PC-9 (cell line): ENCODE measurements at regions of chr13 and their contacts with region 1.

Region 1: DNA sequence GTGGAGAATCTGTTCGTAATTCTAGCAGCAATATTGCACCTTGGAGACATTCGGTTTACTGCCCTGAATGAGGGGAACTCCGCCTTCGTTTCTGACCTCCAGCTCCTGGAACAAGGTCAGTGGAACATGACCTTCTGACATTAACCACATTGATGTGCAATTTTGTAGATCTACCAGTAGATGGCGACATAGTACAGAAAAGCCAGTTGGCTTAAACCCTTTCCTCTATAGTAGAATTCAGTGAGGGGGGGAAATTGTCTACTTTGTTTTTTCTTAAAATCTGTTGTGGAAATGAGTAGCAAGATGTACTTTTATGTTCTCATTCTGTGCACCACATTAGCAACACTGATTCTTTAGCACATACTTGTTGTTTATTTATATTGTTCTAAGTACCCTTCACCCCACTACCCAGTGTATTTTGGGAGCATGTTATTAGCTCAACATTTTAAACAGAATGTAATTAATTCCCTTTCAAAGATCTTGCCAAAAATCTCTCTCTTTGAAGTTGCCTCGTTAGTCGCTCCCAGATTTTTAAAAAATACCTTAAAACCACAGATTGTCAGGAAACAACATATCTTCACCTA is 332.2 kb downstream of the MYO16 start:
- DNase-seq: peak in 1 of 2 experiments; percentile 63
- H3K4me3 ChIP-seq: no peak overlapping the region
- H3K27ac ChIP-seq: peak overlapping the region; percentile 25
- H3K4me1 ChIP-seq: peaks cover 46% of the 10 kb centered on the region
- H3K27me3 ChIP-seq: no peaks in the 10 kb centered on the region
- CTCF ChIP-seq: peak; percentile 98

Region 2: GRCh38 chr13:107867701-107868661 is 1093.7 kb before region 1 on chr13:
- CTCF ChIA-PET with region 1: no interaction called
- POLR2A ChIA-PET with region 1: no interaction called
- intact Hi-C with region 1: no loop called
- DNase-seq: peak in 1 of 2 experiments; percentile 29
- H3K4me3 ChIP-seq: peak overlapping the region; percentile 61
- H3K27ac ChIP-seq: no peak overlapping the region
- H3K4me1 ChIP-seq: no peaks in the 10 kb centered on the region
- H3K27me3 ChIP-seq: no peaks in the 10 kb centered on the region
- CTCF ChIP-seq: peak; percentile 59

Region 3: GRCh38 chr13:108895220-108895704 is 66.4 kb before region 1 on chr13:
- CTCF ChIA-PET with region 1: no interaction called
- POLR2A ChIA-PET with region 1: no interaction called
- intact Hi-C with region 1: no loop called
- DNase-seq: peak in 1 of 2 experiments; percentile 78
- H3K4me3 ChIP-seq: no peak overlapping the region
- H3K27ac ChIP-seq: no peak overlapping the region
- H3K4me1 ChIP-seq: peaks cover 7% of the 10 kb centered on the region
- H3K27me3 ChIP-seq: no peaks in the 10 kb centered on the region
- CTCF ChIP-seq: peak; percentile 78

Region 4: DNA sequence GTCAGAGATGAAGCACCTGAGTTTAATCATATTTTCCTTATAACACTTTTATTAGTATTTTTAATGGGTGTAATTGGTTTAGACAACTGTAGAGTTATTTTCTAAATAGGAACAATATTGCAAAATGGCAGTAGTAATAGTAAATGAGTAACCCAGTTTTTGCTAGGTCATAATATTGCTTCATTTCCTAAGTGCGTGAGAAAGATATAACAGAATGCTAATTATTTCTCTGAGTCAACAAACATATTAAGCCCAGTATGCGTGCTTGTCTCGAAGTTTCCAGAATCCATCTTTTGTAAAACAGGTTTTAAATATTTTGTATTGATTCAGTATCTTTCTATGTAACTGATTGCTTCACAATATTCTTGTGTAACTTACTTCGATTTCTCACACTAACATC is 16.9 kb before region 1 on chr13:
- CTCF ChIA-PET with region 1: no interaction called
- POLR2A ChIA-PET with region 1: no interaction called
- intact Hi-C with region 1: no loop called
- DNase-seq: peak in 1 of 2 experiments; percentile 49
- H3K4me3 ChIP-seq: no peak overlapping the region
- H3K27ac ChIP-seq: no peak overlapping the region
- H3K4me1 ChIP-seq: no peaks in the 10 kb centered on the region
- H3K27me3 ChIP-seq: no peaks in the 10 kb centered on the region
- CTCF ChIP-seq: no peak

Region 5: GRCh38 chr13:109172136-109172535 is 210.5 kb after region 1 on chr13:
- CTCF ChIA-PET with region 1: no interaction called
- POLR2A ChIA-PET with region 1: interaction called, 12 read pairs
- intact Hi-C with region 1: no loop called
- DNase-seq: no peak
- H3K4me3 ChIP-seq: no peak overlapping the region
- H3K27ac ChIP-seq: no peak overlapping the region
- H3K4me1 ChIP-seq: no peaks in the 10 kb centered on the region; the same call in 1 of the 2 replicates
- H3K27me3 ChIP-seq: no peaks in the 10 kb centered on the region
- CTCF ChIP-seq: no peak

Region 6: DNA sequence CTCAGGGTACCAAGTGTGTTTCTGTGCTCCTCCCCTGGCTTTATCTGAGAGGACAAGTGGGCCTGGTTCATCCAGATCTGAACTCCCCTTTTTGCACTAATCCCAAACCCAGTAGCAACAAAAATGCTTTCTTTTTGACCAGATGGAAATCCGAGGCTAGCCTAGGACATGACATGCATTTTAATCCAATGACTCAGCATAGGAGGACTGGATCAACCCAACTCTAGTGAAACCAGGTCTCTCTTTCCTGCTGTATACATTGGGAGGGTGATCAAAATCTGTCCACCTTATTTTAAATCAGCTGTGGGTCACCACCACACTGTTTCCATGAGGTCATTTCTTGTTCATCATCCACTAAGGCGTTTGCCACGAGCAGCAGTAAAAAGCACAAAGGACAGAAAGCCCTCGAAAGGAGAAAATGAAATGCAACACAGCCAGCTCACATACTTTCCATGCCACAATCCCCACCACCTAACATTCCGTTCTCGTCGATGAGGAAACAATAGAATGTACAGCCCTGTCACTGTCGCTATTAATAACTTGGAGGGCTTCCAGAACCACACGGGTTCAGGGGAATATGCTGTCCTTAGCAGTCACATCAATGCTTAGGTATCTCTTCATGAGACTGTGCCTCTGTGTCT is 281.8 kb after region 1 on chr13:
- CTCF ChIA-PET with region 1: no interaction called
- POLR2A ChIA-PET with region 1: no interaction called
- intact Hi-C with region 1: loop called (anchors 1 kb)
- DNase-seq: peak; percentile 75 to 96
- H3K4me3 ChIP-seq: peak overlapping the region; percentile 22; the same call in 1 of the 2 replicates
- H3K27ac ChIP-seq: peak overlapping the region; percentile 92
- H3K4me1 ChIP-seq: peaks cover 39% of the 10 kb centered on the region
- H3K27me3 ChIP-seq: no peaks in the 10 kb centered on the region
- CTCF ChIP-seq: no peak

Region 7: GRCh38 chr13:109383670-109384069 is 422.0 kb after region 1 on chr13:
- CTCF ChIA-PET with region 1: no interaction called
- POLR2A ChIA-PET with region 1: no interaction called
- intact Hi-C with region 1: loop called (anchors 10 kb)
- DNase-seq: peak; percentile 35 to 95
- H3K4me3 ChIP-seq: no peak overlapping the region
- H3K27ac ChIP-seq: peak overlapping the region; percentile 61
- H3K4me1 ChIP-seq: peaks cover 26% of the 10 kb centered on the region
- H3K27me3 ChIP-seq: no peaks in the 10 kb centered on the region
- CTCF ChIP-seq: 0 out of 2 replicates have a peak, but pooled peaks have one; percentile 21

Region 8: GRCh38 chr13:110006304-110006703 is 1044.7 kb after region 1 on chr13:
- CTCF ChIA-PET with region 1: no interaction called
- POLR2A ChIA-PET with region 1: no interaction called
- intact Hi-C with region 1: loop called (anchors 10 kb)
- DNase-seq: peak; percentile 72 to 95
- H3K4me3 ChIP-seq: no peak overlapping the region
- H3K27ac ChIP-seq: peak overlapping the region; percentile 71
- H3K4me1 ChIP-seq: peaks cover 39% of the 10 kb centered on the region
- H3K27me3 ChIP-seq: no peaks in the 10 kb centered on the region
- CTCF ChIP-seq: no peak

Region 9: GRCh38 chr13:110138010-110138699 is 1176.5 kb after region 1 on chr13:
- CTCF ChIA-PET with region 1: no interaction called
- POLR2A ChIA-PET with region 1: no interaction called
- intact Hi-C with region 1: loop called (anchors 1 kb)
- DNase-seq: peak; percentile 82 to 94
- H3K4me3 ChIP-seq: peak overlapping the region; percentile 67
- H3K27ac ChIP-seq: peak overlapping the region; percentile 95
- H3K4me1 ChIP-seq: peaks cover 42% of the 10 kb centered on the region
- H3K27me3 ChIP-seq: no peaks in the 10 kb centered on the region
- CTCF ChIP-seq: peak; percentile 42; the same call in 1 of the 2 replicates